Gastrocnemius medialis (tissue), 4 donors: ENCODE measurements at regions of chr1 and their contacts with region 1.

Region 1: GRCh38 chr1:234176000-234176399 is 197.3 kb upstream of the COA6 start:
- DNase-seq: no peak
- ATAC-seq: no peak
- H3K4me3 ChIP-seq: no peak overlapping the region
- H3K27ac ChIP-seq: no peak overlapping the region
- H3K4me1 ChIP-seq: peaks cover 0 to 4% of the 10 kb centered on the region in 2 donors
- H3K27me3 ChIP-seq: no peaks in the 10 kb centered on the region
- CTCF ChIP-seq: no peak
- POLR2A ChIP-seq: no peak

Region 2: GRCh38 chr1:234188454-234188792 is 12.4 kb after region 1 on chr1:
- in situ Hi-C with region 1: no loop called
- intact Hi-C with region 1: loop called (anchors 1 kb)
- DNase-seq: no peak
- ATAC-seq: no peak
- H3K4me3 ChIP-seq: no peak overlapping the region
- H3K27ac ChIP-seq: no peak overlapping the region
- H3K4me1 ChIP-seq: peaks cover 0 to 7% of the 10 kb centered on the region in 2 donors
- H3K27me3 ChIP-seq: no peaks in the 10 kb centered on the region
- CTCF ChIP-seq: no peak
- POLR2A ChIP-seq: no peak

Region 3: GRCh38 chr1:234292011-234292410 is 116.0 kb after region 1 on chr1:
- in situ Hi-C with region 1: no loop called
- intact Hi-C with region 1: no loop called
- DNase-seq: no peak
- ATAC-seq: no peak
- H3K4me3 ChIP-seq: no peak overlapping the region
- H3K27ac ChIP-seq: no peak overlapping the region
- H3K4me1 ChIP-seq: peaks cover 7 to 12% of the 10 kb centered on the region in 2 donors
- H3K27me3 ChIP-seq: no peaks in the 10 kb centered on the region
- CTCF ChIP-seq: no peak
- POLR2A ChIP-seq: no peak

Region 4: DNA sequence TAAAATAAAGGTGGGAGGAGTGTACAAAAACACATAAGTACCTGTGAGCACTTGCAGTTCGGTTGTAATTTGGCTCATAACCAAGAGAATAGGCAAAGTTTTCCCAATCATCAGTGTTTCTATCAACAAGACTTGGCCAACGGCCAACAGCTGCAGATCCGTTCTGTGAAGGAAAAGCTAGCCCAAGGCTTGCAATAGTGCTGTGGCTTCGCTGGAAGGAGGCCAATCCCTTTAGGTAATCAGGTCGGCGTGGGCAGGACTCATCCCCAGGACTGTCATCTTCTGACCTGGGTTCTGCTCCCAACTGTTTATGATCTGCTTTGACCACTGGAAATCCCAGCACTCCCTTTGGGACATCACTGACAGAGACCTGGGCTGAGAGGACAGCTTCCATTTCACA is 1582.9 kb after region 1 on chr1:
- in situ Hi-C with region 1: no loop called
- intact Hi-C with region 1: no loop called
- DNase-seq: no peak
- ATAC-seq: no peak
- H3K4me3 ChIP-seq: no peak overlapping the region
- H3K27ac ChIP-seq: no peak overlapping the region
- H3K4me1 ChIP-seq: no peaks in the 10 kb centered on the region
- H3K27me3 ChIP-seq: no peaks in the 10 kb centered on the region
- CTCF ChIP-seq: no peak
- POLR2A ChIP-seq: no peak